ENCODE measurements at regions of chr3 and their contacts with region 1.

Region 1: GRCh38 chr3:30112902-30113484 is 493.4 kb upstream of the TGFBR2 start:
- DNase-seq: no peak

Region 2: DNA sequence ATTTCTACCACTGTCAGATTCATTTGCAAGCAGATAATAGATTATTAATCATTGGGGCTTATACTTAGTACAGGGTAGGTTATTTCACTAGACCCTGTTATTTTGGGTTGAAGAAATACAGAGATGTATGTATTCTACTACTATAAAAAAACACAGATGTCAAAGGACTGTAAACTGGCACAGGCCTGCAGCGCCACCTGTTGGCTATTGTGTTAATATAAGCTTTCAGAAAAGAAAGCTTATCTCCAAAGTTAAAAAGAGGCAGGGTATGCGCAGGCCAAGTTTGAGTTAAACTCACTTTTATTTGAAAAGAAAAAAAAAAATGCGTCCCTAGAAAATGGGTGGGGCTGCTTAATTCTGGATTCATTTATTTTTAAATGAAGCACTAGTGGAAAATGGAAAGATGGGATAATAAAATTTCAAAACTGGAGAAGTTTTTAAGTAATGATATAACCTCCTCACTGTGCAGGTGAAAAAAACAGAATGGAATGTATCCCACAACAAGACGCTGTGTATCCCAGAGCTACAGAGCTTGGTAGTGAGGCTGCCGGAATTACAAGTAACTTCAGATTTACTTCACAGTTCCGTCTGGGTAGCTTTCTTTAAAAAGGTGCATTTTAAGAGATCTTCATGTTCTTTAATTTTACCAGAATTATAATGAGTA is 86.2 kb after region 1 on chr3:
- intact Hi-C with region 1: loop called (anchors 1 kb)
- DNase-seq: peak; percentile 16 to 93 (median 76)

Region 3: DNA sequence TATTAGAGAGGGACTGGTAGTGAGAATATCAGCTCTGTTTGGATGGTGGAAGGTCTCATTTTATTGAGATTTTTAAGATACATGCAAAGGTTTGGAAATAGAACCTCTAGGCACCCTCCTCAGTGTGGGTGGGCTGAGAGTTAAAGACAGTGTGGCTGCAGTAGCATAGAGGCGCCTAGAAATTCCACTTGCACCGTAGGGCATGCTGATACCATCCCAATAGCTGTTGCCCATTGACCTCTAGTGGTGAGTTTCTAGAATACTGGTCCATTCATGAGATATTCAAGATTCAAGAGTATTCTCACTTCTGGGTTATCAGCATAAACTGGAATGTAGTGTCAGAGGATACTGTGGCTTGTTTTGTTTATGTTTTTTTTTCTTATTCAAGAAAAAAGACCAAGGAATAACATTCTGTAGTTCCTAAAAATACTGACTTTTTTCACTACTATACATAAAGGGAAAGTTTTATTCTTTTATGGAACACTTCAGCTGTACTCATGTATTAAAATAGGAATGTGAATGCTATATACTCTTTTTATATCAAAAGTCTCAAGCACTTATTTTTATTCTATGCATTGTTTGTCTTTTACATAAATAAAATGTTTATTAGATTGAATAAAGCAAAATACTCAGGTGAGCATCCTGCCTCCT is 580.6 kb after region 1 on chr3:
- intact Hi-C with region 1: loop called (anchors 5 kb)
- DNase-seq: peak in 3 of 10 donors; percentile 19 to 40 (median 28)

Measured in posterior cingulate gyrus (tissue), 11 donors.